ENCODE measurements at regions of chr2 and their contacts with region 1.

Region 1: DNA sequence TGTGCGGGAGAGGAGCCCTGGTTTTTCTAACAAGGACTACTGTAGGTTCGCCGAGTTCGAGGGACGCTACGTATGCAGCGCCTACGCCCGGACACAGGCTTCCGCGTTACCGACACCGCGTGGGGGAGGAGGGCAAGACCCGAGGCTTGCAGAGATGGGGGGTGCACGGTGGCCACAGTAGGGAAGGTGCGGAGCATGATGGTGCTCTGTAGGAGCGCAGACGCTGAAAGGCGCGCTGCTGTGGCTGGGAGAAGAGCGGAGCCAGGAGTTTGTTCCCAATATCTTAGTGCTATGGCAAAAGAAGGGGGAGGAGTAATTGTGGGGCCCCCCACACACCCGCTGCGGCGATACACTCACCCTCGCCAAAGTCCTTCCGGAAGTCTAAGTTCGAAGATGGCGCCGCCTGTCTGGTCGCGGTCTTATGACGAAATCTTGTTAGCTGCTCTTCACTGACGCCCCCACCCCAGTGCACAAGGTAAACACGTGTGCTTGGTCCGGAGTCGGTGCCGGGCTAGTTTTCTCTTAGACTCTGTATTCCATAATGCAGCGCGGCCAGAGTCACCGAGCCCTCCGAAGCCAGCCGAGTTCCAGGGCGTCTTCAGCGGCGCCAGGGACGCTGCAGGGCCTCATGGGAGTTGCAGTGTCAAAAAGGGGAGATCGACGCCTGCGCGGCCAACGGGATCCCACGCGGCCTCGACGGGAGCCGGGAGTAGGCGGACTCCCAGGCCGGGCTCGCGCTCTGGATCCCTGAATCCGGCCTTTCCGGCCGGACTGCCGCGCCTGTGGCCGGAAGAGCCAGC is at the start of gene GTF3C2:
- DNase-seq: peak; percentile 96
- ATAC-seq: peak; percentile 82
- H3K4me3 Mint-ChIP-seq: peak within 1 kb of the TSS; percentile 98
- H3K27ac Mint-ChIP-seq: peak within 1 kb of the TSS; percentile 100
- H3K4me1 Mint-ChIP-seq: peaks cover 50% of the 10 kb centered on the region
- H3K27me3 Mint-ChIP-seq: no peaks in the 10 kb centered on the region
- total RNA-seq, gene GTF3C2: 60.3 to 70.2 TPM

Region 2: GRCh38 chr2:27071277-27071989 is 285.1 kb before region 1 on chr2 and contains the start of gene OST4:
- CTCF ChIA-PET with region 1: no interaction called
- POLR2A ChIA-PET with region 1: no interaction called
- intact Hi-C with region 1: loop called in 1 of 2 experiments (anchors 1 kb)
- DNase-seq: peak; percentile 94
- ATAC-seq: peak; percentile 89
- H3K4me3 Mint-ChIP-seq: peak within 1 kb of the TSS; percentile 96
- H3K27ac Mint-ChIP-seq: peak within 1 kb of the TSS; percentile 91
- H3K4me1 Mint-ChIP-seq: peaks cover 66% of the 10 kb centered on the region
- H3K27me3 Mint-ChIP-seq: no peaks in the 10 kb centered on the region
- total RNA-seq, gene OST4: 305 to 406 TPM

Region 3: GRCh38 chr2:27211829-27212627 is 144.6 kb before region 1 on chr2 and contains the starts of genes ATRAID and SLC5A6:
- CTCF ChIA-PET with region 1: no interaction called
- POLR2A ChIA-PET with region 1: no interaction called
- intact Hi-C with region 1: loop called (anchors 1 kb)
- DNase-seq: peak; percentile 93
- ATAC-seq: peak; percentile 90
- H3K4me3 Mint-ChIP-seq: peak within 1 kb of the TSS; percentile 99
- H3K27ac Mint-ChIP-seq: peak within 1 kb of the TSS; percentile 100
- H3K4me1 Mint-ChIP-seq: peaks cover 34% of the 10 kb centered on the region
- H3K27me3 Mint-ChIP-seq: no peaks in the 10 kb centered on the region
- total RNA-seq, gene ATRAID: 69.9 to 83.4 TPM
- total RNA-seq, gene SLC5A6: 27.3 to 34.9 TPM

Region 4: GRCh38 chr2:27370026-27370815 is 13.6 kb after region 1 on chr2 and contains the starts of genes EIF2B4 and SNX17:
- CTCF ChIA-PET with region 1: interaction called, 5 read pairs
- POLR2A ChIA-PET with region 1: interaction called, 10 read pairs
- intact Hi-C with region 1: loop called (anchors 1 kb)
- DNase-seq: peak; percentile 99
- ATAC-seq: peak; percentile 95
- H3K4me3 Mint-ChIP-seq: peak within 1 kb of the TSS; percentile 90
- H3K27ac Mint-ChIP-seq: peak within 1 kb of the TSS; percentile 95
- H3K4me1 Mint-ChIP-seq: peaks cover 39% of the 10 kb centered on the region
- H3K27me3 Mint-ChIP-seq: no peaks in the 10 kb centered on the region
- total RNA-seq, gene EIF2B4: 31.0 to 39.2 TPM
- total RNA-seq, gene SNX17: 63.9 to 82.1 TPM

Region 5: DNA sequence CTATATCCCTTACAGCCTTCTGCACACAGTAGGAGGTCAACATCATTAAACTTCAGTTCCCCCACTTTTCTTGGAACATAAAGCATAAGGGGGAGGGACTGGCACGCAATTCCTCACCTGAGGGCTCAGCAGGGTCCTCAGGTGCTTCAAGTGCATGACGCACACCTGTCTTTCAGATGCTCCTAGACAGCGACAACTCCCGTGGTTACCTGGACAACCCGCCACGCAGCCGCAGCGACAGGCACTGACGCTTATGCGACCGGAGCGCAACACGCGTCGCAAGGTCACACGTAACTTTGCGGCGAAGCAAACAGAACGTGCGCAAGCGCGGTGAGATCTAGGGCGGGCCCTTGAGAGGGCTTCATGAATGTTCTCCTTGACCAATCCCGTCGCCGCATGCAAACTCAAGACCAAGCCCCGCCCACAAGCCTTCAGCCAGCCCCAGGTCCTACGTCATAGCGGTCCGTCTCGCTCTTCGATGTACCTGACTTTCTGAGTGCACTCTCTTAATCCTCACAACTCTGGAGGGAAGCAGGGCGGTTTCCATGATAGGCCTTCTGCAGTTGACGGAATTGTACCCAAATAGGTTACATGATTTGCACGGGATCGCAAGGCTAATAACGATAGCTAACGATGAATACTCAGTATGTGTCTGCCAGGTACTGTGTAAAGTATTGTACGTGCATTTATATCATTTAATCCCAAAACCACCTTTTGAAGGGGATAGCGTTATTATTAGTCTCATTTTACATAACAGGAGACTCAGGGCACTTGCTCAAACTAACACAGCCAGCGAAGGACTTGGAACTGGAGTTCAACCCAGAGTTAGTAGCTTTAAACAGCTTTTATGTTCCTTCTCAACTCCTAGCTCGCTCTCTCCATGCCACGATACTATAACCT is 133.2 kb after region 1 on chr2 and contains the start of gene IFT172:
- CTCF ChIA-PET with region 1: no interaction called
- POLR2A ChIA-PET with region 1: no interaction called
- intact Hi-C with region 1: loop called (anchors 1 kb)
- DNase-seq: peak; percentile 100
- ATAC-seq: peak; percentile 97
- H3K4me3 Mint-ChIP-seq: peak within 1 kb of the TSS; percentile 75
- H3K27ac Mint-ChIP-seq: peak within 1 kb of the TSS; percentile 63
- H3K4me1 Mint-ChIP-seq: peaks cover 23% of the 10 kb centered on the region
- H3K27me3 Mint-ChIP-seq: peaks cover 11% of the 10 kb centered on the region
- total RNA-seq, gene IFT172: 8.7 TPM

Region 6: GRCh38 chr2:27663463-27664249 is 307.1 kb after region 1 on chr2 and contains the starts of genes SLC4A1AP and SUPT7L:
- CTCF ChIA-PET with region 1: no interaction called
- POLR2A ChIA-PET with region 1: no interaction called
- intact Hi-C with region 1: loop called in 1 of 2 experiments (anchors 1 kb)
- DNase-seq: peak; percentile 80
- ATAC-seq: peak; percentile 81
- H3K4me3 Mint-ChIP-seq: peak within 1 kb of the TSS; percentile 98
- H3K27ac Mint-ChIP-seq: peak within 1 kb of the TSS; percentile 100
- H3K4me1 Mint-ChIP-seq: peaks cover 42% of the 10 kb centered on the region
- H3K27me3 Mint-ChIP-seq: no peaks in the 10 kb centered on the region
- total RNA-seq, gene SLC4A1AP: 23.8 to 25.3 TPM
- total RNA-seq, gene SUPT7L: 23.7 to 26.1 TPM

Measured in activated CD4-positive, alpha-beta T cell treated with anti-CD3 and anti-CD28 coated beads for 36 hours (primary cell).